Ascending aorta (tissue), 2 donors: ENCODE measurements at regions of chr4 and their contacts with region 1.

Region 1: GRCh38 chr4:87679449-87680169 is 29.5 kb downstream of the DMP1 start:
- DNase-seq: no peak
- H3K4me3 ChIP-seq: no peak overlapping the region
- H3K27ac ChIP-seq: no peak overlapping the region
- H3K4me1 ChIP-seq: no peaks in the 10 kb centered on the region
- H3K27me3 ChIP-seq: no peaks in the 10 kb centered on the region
- CTCF ChIP-seq: peak; percentile 58 to 82 (median 81)

Region 2: DNA sequence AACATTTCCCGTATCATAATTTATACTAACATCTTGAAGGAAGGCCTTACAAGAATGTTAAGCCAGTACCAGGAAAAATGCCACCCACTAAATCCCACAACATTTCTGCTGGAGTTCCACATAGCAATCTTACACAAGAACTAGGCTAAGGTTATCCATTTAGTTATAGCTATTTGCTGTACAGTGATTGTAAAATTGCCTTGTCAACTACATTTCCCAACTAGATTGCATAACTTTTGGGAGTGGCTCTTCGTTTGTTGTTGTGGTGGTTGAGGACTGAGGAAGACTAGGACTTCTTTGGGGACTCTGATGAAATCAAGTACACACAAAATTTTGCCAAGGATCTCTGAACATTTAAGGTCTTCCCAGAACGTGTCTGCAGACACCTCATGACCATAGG is 127.8 kb after region 1 on chr4:
- intact Hi-C with region 1: no loop called
- DNase-seq: no peak
- H3K4me3 ChIP-seq: no peak overlapping the region
- H3K27ac ChIP-seq: no peak overlapping the region
- H3K4me1 ChIP-seq: no peaks in the 10 kb centered on the region
- H3K27me3 ChIP-seq: no peaks in the 10 kb centered on the region
- CTCF ChIP-seq: no peak

Region 3: DNA sequence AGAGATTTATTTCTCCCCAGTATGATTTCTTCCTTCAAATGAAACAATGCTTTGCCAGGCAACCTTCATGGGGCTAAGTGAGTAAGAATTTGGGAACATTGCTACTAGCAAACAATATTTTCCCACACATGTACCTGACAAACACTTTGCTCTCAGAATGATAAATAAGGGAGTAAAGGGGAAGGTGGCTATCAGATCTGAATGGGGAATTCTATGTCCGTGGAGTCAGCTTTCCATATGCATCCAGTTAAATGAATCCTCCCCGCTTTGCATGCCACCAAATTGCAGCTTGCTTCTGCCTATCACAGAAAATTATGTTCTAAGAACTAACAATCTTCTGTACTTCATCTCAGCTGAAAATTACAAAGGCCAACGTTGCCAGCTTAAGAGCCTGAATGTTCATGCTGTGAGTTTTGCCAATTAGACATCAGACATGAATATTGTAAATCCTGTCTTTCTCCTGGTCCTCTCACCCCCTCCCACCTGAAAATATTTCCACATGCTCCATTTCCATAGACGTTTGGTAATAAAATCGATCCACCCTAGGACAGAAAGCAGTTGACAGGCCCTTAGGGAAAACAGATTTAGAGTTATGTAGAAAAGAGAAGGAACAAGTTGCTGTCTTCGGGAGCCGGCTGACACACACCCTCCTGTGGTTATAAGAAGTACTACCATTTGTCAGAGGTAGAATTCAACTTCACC is 159.4 kb after region 1 on chr4:
- intact Hi-C with region 1: loop called (anchors 1 kb)
- DNase-seq: no peak
- H3K4me3 ChIP-seq: no peak overlapping the region
- H3K27ac ChIP-seq: no peak overlapping the region
- H3K4me1 ChIP-seq: peaks cover 0 to 4% of the 10 kb centered on the region in 2 donors
- H3K27me3 ChIP-seq: no peaks in the 10 kb centered on the region
- CTCF ChIP-seq: peak; percentile 48 to 86 (median 78)

Region 4: GRCh38 chr4:87973283-87974169 is 293.9 kb after region 1 on chr4:
- intact Hi-C with region 1: loop called (anchors 10 kb)
- DNase-seq: peak in 1 of 2 donors; percentile 73
- H3K4me3 ChIP-seq: peak overlapping the region in 1 of 2 donors; percentile 18
- H3K27ac ChIP-seq: no peak overlapping the region
- H3K4me1 ChIP-seq: no peaks in the 10 kb centered on the region
- H3K27me3 ChIP-seq: no peaks in the 10 kb centered on the region
- CTCF ChIP-seq: peak; percentile 67 to 86 (median 73)